ENCODE measurements at regions of chr10 and their contacts with region 1.

Region 1: GRCh38 chr10:91185239-91185875 is 35.1 kb upstream of the PCGF5 start:
- DNase-seq: no peak
- ATAC-seq: no peak
- H3K4me3 Mint-ChIP-seq: no peak overlapping the region
- H3K27ac Mint-ChIP-seq: no peak overlapping the region
- H3K4me1 Mint-ChIP-seq: peaks cover 72% of the 10 kb centered on the region
- H3K27me3 Mint-ChIP-seq: no peaks in the 10 kb centered on the region

Region 2: GRCh38 chr10:91153508-91153907 is 31.8 kb before region 1 on chr10:
- CTCF ChIA-PET with region 1: no interaction called
- POLR2A ChIA-PET with region 1: interaction called, 12 read pairs
- intact Hi-C with region 1: no loop called
- DNase-seq: no peak
- ATAC-seq: no peak
- H3K4me3 Mint-ChIP-seq: no peak overlapping the region
- H3K27ac Mint-ChIP-seq: no peak overlapping the region
- H3K4me1 Mint-ChIP-seq: peaks cover 2% of the 10 kb centered on the region
- H3K27me3 Mint-ChIP-seq: no peaks in the 10 kb centered on the region